Heart right ventricle (tissue), 16 donors: ENCODE measurements at regions of chr18 and their contacts with region 1.

Region 1: DNA sequence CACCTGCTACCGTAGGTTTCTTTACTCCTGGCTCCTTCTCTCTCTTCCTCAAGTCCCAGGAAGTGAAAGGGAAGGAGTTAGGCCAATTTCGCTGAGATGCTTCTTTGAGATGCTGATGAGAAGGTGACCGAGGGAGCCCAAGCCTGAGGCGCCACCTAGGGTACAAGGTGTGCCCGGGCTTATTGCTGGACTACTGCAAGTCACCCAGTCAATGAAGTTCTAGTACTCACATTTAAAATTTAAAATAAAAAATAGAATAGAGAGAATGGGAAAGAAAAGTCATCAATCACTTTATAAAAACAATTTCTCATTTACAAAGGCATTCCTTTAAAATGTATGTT is 45.3 kb downstream of the ACAA2 start:
- DNase-seq: peak; percentile 27 to 32
- ATAC-seq: peak in 7 of 8 donors; percentile 42 to 75 (median 59)
- H3K4me3 ChIP-seq: no peak overlapping the region
- H3K27ac ChIP-seq: no peak overlapping the region
- H3K4me1 ChIP-seq: no peaks in the 10 kb centered on the region
- H3K27me3 ChIP-seq: no peaks in the 10 kb centered on the region
- CTCF ChIP-seq: peak in 8 of 9 donors; percentile 23 to 71 (median 53)

Region 2: GRCh38 chr18:49550621-49551339 is 217.2 kb before region 1 on chr18:
- intact Hi-C with region 1: loop called in 1 of 10 experiments (anchors 10 kb)
- DNase-seq: no peak
- ATAC-seq: no peak
- H3K4me3 ChIP-seq: no peak overlapping the region
- H3K27ac ChIP-seq: no peak overlapping the region
- H3K4me1 ChIP-seq: no peaks in the 10 kb centered on the region
- H3K27me3 ChIP-seq: peaks cover 0 to 29% (median 3%) of the 10 kb centered on the region in 7 donors
- CTCF ChIP-seq: no peak

Region 3: GRCh38 chr18:49561289-49562193 is 206.5 kb before region 1 on chr18 and contains the start of gene LIPG:
- intact Hi-C with region 1: loop called in 6 of 10 experiments (anchors 2 to 10 kb)
- DNase-seq: no peak
- ATAC-seq: peak in 7 of 8 donors; percentile 29 to 63 (median 40)
- H3K4me3 ChIP-seq: peak within 1 kb of the TSS; percentile 15 to 57 (median 44)
- H3K27ac ChIP-seq: peak within 1 kb of the TSS in 1 of 10 donors; percentile 44
- H3K4me1 ChIP-seq: peaks cover 9 to 45% (median 26%) of the 10 kb centered on the region in 9 donors
- H3K27me3 ChIP-seq: peaks cover 0 to 77% (median 55%) of the 10 kb centered on the region in 7 donors
- CTCF ChIP-seq: no peak
- total RNA-seq, gene LIPG: 0.12 to 14.0 (median 0.42) TPM in 7 of 10 donors, not detected in the others

Region 4: GRCh38 chr18:49618742-49619681 is 149.0 kb before region 1 on chr18:
- intact Hi-C with region 1: no loop called
- DNase-seq: no peak
- ATAC-seq: peak in 4 of 8 donors; percentile 29 to 40 (median 36)
- H3K4me3 ChIP-seq: no peak overlapping the region
- H3K27ac ChIP-seq: no peak overlapping the region
- H3K4me1 ChIP-seq: peaks cover 0 to 15% (median 0%) of the 10 kb centered on the region in 9 donors
- H3K27me3 ChIP-seq: peaks cover 3 to 36% (median 10%) of the 10 kb centered on the region in 7 donors
- CTCF ChIP-seq: no peak

Region 5: DNA sequence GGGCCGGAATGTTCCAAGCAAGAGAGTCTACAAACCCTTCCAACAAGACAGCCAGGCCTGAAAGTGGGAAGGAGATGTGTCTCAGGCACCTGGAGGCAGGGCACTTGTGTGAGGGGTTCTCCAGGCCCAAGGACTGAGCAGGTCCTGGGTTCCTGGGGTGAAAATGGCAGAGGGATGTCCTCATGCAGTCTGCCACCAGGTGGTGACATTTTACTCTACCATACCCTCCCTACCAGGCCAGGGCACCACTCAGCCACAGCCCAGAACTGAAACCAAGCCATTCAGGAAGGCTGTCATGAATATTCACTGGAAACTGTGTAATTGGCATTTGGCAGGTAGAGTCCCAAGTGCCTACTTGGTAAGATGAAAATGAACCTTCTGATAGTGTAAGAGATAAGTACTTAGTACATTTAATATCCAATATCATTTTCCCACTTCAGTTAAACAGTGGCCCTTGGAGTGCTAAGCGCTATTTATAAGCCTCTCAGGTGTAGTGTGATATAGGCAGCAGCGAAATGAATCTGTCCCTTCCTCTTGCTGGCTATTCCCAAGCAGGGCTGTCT is 241.8 kb after region 1 on chr18:
- intact Hi-C with region 1: no loop called
- DNase-seq: peak; percentile 10
- ATAC-seq: peak; percentile 49 to 85 (median 56)
- H3K4me3 ChIP-seq: no peak overlapping the region
- H3K27ac ChIP-seq: no peak overlapping the region
- H3K4me1 ChIP-seq: no peaks in the 10 kb centered on the region
- H3K27me3 ChIP-seq: peaks cover 0 to 27% (median 7%) of the 10 kb centered on the region in 7 donors
- CTCF ChIP-seq: peak in 7 of 9 donors; percentile 47 to 55 (median 52)